CD4-positive, alpha-beta memory T cell (primary cell): ENCODE measurements at regions of chr1 and their contacts with region 1.

Region 1: DNA sequence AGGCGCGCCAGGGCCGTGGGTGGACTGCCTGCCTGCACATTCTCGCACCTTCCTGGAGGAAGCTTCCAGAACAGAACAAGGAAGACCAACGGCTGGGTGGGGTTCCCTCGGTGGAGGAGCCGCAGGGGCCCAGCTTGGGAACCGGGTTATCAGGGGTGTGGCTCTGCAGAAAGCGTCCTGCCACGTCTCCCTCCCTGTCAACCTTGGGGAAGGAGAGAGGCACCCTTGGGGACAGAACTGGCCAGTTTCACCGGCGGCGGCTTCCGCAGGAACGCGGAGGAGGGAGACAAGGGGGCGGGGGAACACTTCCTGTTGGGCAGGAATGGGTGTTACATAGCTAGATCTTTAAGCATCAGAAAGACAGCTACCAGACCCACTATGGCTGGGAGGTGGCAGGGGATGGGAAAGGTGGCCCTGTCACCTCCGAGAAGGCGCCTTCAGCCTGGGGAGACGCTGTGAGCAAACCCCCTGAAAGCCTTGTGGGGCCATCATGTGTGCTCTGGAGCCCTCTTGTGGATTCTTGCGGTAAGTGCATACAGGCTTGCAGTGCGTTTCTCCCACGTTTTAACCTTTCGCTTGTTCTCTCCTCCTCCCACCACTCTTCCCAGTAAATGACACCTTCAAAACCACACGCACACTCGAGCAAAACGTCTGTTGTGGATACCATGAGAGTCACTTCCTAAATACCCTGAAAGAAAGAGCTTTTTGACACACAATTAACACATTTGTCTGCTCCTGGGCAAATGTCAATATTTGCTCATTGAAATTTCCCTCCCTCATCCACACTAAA is 3.8 kb upstream of the PLEKHA6 start:
- DNase-seq: peak; percentile 74 to 78 (median 76)
- H3K4me3 ChIP-seq: peak overlapping the region; percentile 68 to 69
- H3K4me3 Mint-ChIP-seq: peak overlapping the region; percentile 59 to 87 (median 78)
- H3K27ac ChIP-seq: peak overlapping the region; percentile 27
- H3K27ac Mint-ChIP-seq: peak overlapping the region in 6 of 7 donors; percentile 9 to 70 (median 48)
- H3K4me1 ChIP-seq: peaks cover 13% of the 10 kb centered on the region
- H3K4me1 Mint-ChIP-seq: peaks cover 3 to 13% (median 8%) of the 10 kb centered on the region in 4 donors
- H3K27me3 ChIP-seq: no peaks in the 10 kb centered on the region
- H3K27me3 Mint-ChIP-seq: peaks cover 0 to 6% of the 10 kb centered on the region in 2 donors

Region 2: DNA sequence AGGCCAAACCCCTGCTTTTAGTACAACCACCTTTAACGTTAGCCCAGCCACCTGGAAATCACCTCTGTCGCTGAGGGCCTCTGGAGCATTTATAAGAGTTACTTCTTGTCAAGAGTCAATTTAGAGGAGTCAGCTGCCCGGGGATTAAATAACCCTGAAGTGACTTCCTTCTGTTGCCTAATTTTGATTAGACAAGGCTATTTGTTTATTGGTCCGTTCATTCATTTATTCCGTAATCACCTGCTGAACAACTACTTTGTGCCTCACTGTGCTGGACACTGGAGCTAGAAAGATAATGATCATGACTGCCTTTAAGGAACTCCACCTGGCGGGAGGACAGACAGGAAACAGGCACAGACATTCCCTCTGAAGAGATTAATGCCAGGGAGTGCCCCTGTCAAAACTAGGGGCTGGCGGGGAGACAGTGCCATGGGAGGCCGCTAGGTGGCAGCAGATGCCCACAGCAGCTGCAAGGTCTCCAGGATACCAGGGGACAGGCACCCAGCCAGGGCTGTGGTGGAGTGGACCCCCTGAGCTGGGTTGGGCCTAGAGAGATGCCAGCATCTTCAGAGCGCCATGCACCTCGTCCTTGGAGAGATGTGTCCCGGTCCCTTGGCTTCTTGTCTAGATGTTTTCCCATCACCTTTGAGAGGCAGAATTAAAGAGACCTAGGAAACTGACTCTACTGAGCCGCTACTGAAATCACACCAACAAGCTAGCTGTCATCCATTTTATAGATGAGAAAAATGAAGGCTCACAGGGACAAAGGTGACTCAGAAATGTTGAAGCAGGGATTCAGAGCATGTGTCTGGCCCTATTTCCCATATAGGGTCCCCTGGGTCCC is 201.1 kb before region 1 on chr1:
- CTCF ChIA-PET with region 1: interaction called, 153 read pairs
- POLR2A ChIA-PET with region 1: interaction called, 3 read pairs
- intact Hi-C with region 1: loop called (anchors 1 kb)
- DNase-seq: peak; percentile 65 to 76 (median 68)
- H3K4me3 ChIP-seq: no peak overlapping the region
- H3K4me3 Mint-ChIP-seq: no peak overlapping the region
- H3K27ac ChIP-seq: no peak overlapping the region
- H3K27ac Mint-ChIP-seq: no peak overlapping the region
- H3K4me1 ChIP-seq: no peaks in the 10 kb centered on the region
- H3K4me1 Mint-ChIP-seq: no peaks in the 10 kb centered on the region
- H3K27me3 ChIP-seq: no peaks in the 10 kb centered on the region
- H3K27me3 Mint-ChIP-seq: peaks cover 2 to 4% of the 10 kb centered on the region in 2 donors

Region 3: DNA sequence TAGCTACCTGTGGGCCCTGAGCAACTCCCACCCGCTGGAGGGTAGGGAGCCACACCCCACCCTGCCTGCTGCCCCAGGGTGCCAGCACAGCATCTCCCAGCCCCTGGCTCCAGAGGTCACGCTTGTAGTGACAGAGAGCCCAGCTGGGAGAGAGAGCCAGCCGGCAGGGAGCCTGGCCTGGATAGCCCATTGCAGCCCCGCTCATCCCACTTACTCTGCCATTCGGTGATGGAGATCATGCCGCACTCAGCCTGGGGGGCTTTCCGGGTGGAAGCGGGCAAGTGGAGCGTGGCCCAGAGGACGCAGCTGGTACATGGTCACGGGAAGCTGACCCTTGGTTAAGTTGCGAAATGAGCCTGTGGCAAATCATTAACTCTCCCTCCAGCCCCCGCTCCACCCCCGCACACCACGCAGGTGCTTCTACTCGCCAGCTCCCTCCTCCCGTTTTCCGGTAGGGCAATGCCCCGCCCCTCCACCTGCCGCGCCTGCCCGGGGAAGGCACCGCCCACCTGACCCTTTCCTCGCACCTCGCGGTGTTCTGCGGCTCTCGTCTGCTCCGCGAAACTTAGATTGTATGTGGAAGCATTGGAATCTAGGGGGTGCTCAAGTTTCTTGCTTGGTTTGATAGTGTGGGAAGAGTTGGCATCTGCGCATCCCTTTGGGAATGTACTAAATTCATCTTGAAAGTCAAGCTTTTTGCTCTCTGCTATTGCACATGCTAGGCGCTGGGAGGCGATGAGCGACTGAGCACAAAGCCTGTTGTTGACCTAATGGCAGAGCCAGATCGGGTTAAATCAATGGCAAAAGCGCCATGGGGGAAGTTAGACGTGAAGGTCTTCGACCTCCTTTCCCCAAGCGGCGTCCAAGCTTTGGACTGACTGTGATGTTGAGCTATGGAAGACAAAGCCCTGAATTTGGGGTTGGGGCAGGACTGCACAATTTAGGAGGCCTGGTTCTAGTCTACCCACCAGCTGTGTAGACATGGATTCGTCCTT is 149.6 kb before region 1 on chr1 and contains the start of gene GOLT1A:
- CTCF ChIA-PET with region 1: interaction called, 18 read pairs
- POLR2A ChIA-PET with region 1: no interaction called
- intact Hi-C with region 1: no loop called
- DNase-seq: peak; percentile 22 to 57 (median 39)
- H3K4me3 ChIP-seq: no peak within 1 kb of the TSS
- H3K4me3 Mint-ChIP-seq: peak within 1 kb of the TSS; percentile 21 to 81 (median 71)
- H3K27ac ChIP-seq: no peak within 1 kb of the TSS
- H3K27ac Mint-ChIP-seq: peak within 1 kb of the TSS in 1 of 7 donors; percentile 55
- H3K4me1 ChIP-seq: peaks cover 11% of the 10 kb centered on the region
- H3K4me1 Mint-ChIP-seq: peaks cover 6 to 9% (median 6%) of the 10 kb centered on the region in 4 donors
- H3K27me3 ChIP-seq: no peaks in the 10 kb centered on the region
- H3K27me3 Mint-ChIP-seq: peaks cover 0 to 3% of the 10 kb centered on the region in 2 donors
- total RNA-seq, gene GOLT1A: 0.39 TPM in 1 of 2 experiments, not detected in the other

Region 4: DNA sequence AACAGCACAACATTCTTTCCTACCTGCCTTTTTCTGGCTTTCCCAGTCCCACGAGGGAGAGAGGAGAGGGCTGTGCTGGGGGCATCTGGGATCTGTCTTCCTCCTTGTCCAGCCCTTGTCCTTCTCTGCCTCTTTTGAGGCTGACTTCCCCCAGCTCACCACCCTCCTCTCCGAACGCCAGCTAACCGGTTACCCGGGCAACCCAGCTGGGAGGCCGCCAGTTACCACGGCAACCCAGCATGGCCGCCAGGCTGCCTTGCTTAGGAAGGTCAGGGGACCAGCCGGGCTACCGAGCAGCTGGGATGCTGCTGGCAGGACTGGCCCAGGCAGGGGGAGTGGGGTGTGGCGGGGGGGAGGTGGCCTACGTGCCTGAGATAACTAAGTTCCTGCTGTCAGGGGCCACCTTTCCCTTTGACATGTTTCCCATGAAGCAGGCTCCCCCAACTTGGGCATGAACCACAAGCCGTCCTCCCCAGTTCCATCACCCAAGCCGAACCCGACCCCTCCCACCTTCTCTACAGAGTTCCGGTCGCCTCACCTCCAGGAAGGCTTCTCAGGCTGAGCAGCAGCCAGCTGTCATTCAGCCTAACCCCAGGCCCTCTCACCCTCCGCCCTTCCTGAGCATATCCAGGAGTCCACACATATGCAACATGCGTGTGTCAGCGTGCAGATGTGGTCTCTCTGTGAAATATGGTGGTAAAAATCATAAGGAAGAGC is 12.5 kb before region 1 on chr1:
- CTCF ChIA-PET with region 1: interaction called, 38 read pairs
- POLR2A ChIA-PET with region 1: interaction called, 3 read pairs
- intact Hi-C with region 1: no loop called
- DNase-seq: no peak
- H3K4me3 ChIP-seq: no peak overlapping the region
- H3K4me3 Mint-ChIP-seq: no peak overlapping the region
- H3K27ac ChIP-seq: no peak overlapping the region
- H3K27ac Mint-ChIP-seq: no peak overlapping the region
- H3K4me1 ChIP-seq: no peaks in the 10 kb centered on the region
- H3K4me1 Mint-ChIP-seq: peaks cover 0 to 2% (median 0%) of the 10 kb centered on the region in 4 donors
- H3K27me3 ChIP-seq: no peaks in the 10 kb centered on the region
- H3K27me3 Mint-ChIP-seq: peaks cover 1 to 3% of the 10 kb centered on the region in 2 donors

Region 5: GRCh38 chr1:204383163-204383901 is 19.8 kb after region 1 on chr1:
- CTCF ChIA-PET with region 1: interaction called, 11 read pairs
- POLR2A ChIA-PET with region 1: interaction called, 3 read pairs
- intact Hi-C with region 1: no loop called
- DNase-seq: no peak
- H3K4me3 ChIP-seq: no peak overlapping the region
- H3K4me3 Mint-ChIP-seq: no peak overlapping the region
- H3K27ac ChIP-seq: no peak overlapping the region
- H3K27ac Mint-ChIP-seq: no peak overlapping the region
- H3K4me1 ChIP-seq: peaks cover 3% of the 10 kb centered on the region
- H3K4me1 Mint-ChIP-seq: peaks cover 3 to 7% (median 5%) of the 10 kb centered on the region in 4 donors
- H3K27me3 ChIP-seq: peaks cover 4% of the 10 kb centered on the region
- H3K27me3 Mint-ChIP-seq: peaks cover 3 to 11% of the 10 kb centered on the region in 2 donors

Region 6: GRCh38 chr1:204411451-204412204 is 48.1 kb after region 1 on chr1 and contains the start of gene PPP1R15B:
- CTCF ChIA-PET with region 1: interaction called, 3 read pairs
- POLR2A ChIA-PET with region 1: no interaction called
- intact Hi-C with region 1: loop called (anchors 5 kb)
- DNase-seq: peak; percentile 98 to 99 (median 98)
- H3K4me3 ChIP-seq: peak within 1 kb of the TSS; percentile 67 to 99
- H3K4me3 Mint-ChIP-seq: peak within 1 kb of the TSS; percentile 98 to 99 (median 99)
- H3K27ac ChIP-seq: peak within 1 kb of the TSS; percentile 100
- H3K27ac Mint-ChIP-seq: peak within 1 kb of the TSS; percentile 99 to 100 (median 100)
- H3K4me1 ChIP-seq: peaks cover 7% of the 10 kb centered on the region
- H3K4me1 Mint-ChIP-seq: peaks cover 8 to 21% (median 13%) of the 10 kb centered on the region in 4 donors
- H3K27me3 ChIP-seq: no peaks in the 10 kb centered on the region
- H3K27me3 Mint-ChIP-seq: no peaks in the 10 kb centered on the region
- total RNA-seq, gene PPP1R15B: 78.0 to 81.1 TPM